ENCODE measurements at regions of chr6 and their contacts with region 1.

Region 1: GRCh38 chr6:84774157-84774984 is 10.0 kb upstream of the TBX18 start:
- DNase-seq: peak; percentile 79
- H3K4me3 ChIP-seq: peak overlapping the region; percentile 52 to 55 (median 54)
- H3K27ac ChIP-seq: no peak overlapping the region
- H3K4me1 ChIP-seq: peaks cover 15% of the 10 kb centered on the region
- H3K27me3 ChIP-seq: peaks cover 30 to 76% of the 10 kb centered on the region in 2 experiments
- CTCF ChIP-seq: peak; percentile 79 to 85
- POLR2A ChIP-seq: peak; percentile 35

Region 2: DNA sequence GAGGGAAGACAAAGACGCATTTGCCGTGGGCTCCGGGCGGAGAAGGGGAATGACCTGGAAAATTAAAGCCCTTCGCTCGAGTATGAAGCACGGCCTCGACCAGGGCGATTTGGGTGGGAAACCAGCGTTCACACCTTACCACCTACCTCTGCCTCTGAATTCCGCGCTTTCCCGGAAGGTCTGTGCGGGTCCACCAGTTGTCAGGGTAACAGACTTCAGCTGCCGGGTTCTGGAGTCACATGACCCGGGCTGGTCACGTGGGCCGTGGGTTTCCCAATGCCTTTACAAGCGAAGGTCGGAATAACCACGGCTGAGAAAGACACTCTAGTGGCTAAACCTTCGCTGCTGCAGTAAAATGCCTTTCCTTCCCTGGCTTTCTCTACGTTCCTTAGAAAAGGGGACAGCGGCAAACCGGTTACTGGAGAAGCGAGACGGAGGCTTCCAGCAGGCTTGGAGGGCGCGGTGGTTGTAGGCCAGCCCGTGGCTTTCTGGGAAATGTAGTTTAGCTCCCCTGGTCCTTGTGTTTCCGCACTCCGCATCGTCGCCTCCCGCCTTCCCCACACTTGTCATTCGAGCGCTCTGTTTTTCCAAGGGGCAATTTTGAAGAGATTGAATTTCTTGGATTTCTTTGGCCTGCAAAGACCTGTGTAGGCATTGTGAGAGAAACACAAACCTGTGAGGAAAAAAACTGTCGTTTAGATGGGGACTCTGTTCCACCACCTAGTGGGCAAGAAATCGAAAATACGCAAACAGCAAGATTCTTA is 546.8 kb before region 1 on chr6 and contains the start of gene CEP162:
- CTCF ChIA-PET with region 1: interaction called, 3 read pairs
- POLR2A ChIA-PET with region 1: no interaction called
- dilution Hi-C with region 1: no loop called
- intact Hi-C with region 1: loop called (anchors 2 kb)
- DNase-seq: peak; percentile 95
- H3K4me3 ChIP-seq: peak within 1 kb of the TSS; percentile 57 to 74 (median 67)
- H3K27ac ChIP-seq: peak within 1 kb of the TSS; percentile 14
- H3K4me1 ChIP-seq: peaks cover 7% of the 10 kb centered on the region
- H3K27me3 ChIP-seq: peaks cover 11 to 24% of the 10 kb centered on the region in 2 experiments
- CTCF ChIP-seq: peak; percentile 55 to 62
- POLR2A ChIP-seq: peak; percentile 20
- total RNA-seq, gene CEP162: 8.8 and 10.8 TPM in 2 replicates

Region 3: GRCh38 chr6:84284428-84285049 is 489.8 kb before region 1 on chr6:
- CTCF ChIA-PET with region 1: interaction called, 9 read pairs
- POLR2A ChIA-PET with region 1: no interaction called
- dilution Hi-C with region 1: no loop called
- intact Hi-C with region 1: loop called (anchors 1 kb)
- DNase-seq: peak; percentile 41
- H3K4me3 ChIP-seq: no peak overlapping the region
- H3K27ac ChIP-seq: no peak overlapping the region
- H3K4me1 ChIP-seq: no peaks in the 10 kb centered on the region
- H3K27me3 ChIP-seq: peaks cover 6 to 13% of the 10 kb centered on the region in 2 experiments
- CTCF ChIP-seq: peak; percentile 37 to 53
- POLR2A ChIP-seq: no peak

Region 4: GRCh38 chr6:84791233-84791632 is 16.9 kb after region 1 on chr6:
- CTCF ChIA-PET with region 1: interaction called, 31 read pairs
- POLR2A ChIA-PET with region 1: no interaction called
- dilution Hi-C with region 1: no loop called
- intact Hi-C with region 1: no loop called
- DNase-seq: peak; percentile 91
- H3K4me3 ChIP-seq: peak overlapping the region in 1 of 3 experiments; percentile 27
- H3K27ac ChIP-seq: peak overlapping the region; percentile 70
- H3K4me1 ChIP-seq: peaks cover 21% of the 10 kb centered on the region
- H3K27me3 ChIP-seq: no peaks in the 10 kb centered on the region
- CTCF ChIP-seq: no peak
- POLR2A ChIP-seq: no peak

Region 5: DNA sequence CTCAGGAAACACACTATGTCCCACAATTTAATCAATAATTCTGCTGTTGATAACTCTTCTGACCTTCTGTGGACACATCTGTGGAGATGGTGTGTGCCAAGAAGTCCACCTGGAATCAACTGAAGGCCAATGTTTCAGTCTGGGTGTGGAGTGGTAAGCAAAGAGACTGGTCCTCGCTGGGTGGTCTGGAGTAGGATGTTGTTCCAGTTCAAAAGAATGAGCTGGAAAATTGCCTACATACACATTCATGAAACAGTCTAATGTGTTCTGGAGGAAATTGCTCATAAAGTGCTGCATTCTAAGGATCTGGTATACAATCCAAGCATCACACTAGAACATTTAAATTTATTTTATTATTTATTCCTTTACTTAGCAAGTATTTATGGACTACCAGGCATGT is 23.9 kb after region 1 on chr6:
- CTCF ChIA-PET with region 1: interaction called, 25 read pairs
- POLR2A ChIA-PET with region 1: no interaction called
- dilution Hi-C with region 1: no loop called
- intact Hi-C with region 1: loop called (anchors 1 kb)
- DNase-seq: peak; percentile 94
- H3K4me3 ChIP-seq: no peak overlapping the region
- H3K27ac ChIP-seq: no peak overlapping the region
- H3K4me1 ChIP-seq: peaks cover 22% of the 10 kb centered on the region
- H3K27me3 ChIP-seq: no peaks in the 10 kb centered on the region
- CTCF ChIP-seq: no peak
- POLR2A ChIP-seq: no peak

Region 6: DNA sequence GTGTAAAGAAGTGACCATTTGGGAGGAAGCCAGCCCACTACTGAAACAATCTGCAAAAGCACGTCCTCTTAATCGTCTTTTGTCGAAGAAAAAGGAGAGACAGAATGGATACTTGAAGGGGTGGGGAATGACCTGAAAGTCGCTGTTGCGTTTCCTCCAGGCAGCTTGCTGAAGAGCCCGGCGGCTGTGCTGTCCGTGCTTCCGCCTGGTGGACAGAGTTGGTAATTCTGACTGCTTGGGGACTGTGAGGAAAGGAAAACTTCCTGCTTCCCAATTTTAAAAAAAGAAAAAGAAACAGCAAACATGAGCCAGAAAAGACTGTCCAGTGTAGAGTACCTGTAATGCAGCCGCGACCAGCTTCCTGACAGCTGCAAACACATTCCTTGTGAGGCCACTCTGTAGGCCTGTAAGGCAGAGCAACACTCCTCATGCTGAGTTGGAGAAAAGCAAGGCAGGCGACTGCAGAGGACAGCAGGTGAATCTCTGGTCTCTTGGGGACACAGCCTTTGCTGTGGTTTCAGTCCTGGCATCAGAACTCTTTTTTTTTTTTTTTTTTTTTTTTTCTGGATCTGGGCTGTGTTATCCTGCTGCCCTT is 241.1 kb after region 1 on chr6:
- CTCF ChIA-PET with region 1: interaction called, 8 read pairs
- POLR2A ChIA-PET with region 1: no interaction called
- dilution Hi-C with region 1: no loop called
- intact Hi-C with region 1: loop called (anchors 1 kb)
- DNase-seq: peak; percentile 83
- H3K4me3 ChIP-seq: no peak overlapping the region
- H3K27ac ChIP-seq: no peak overlapping the region
- H3K4me1 ChIP-seq: no peaks in the 10 kb centered on the region
- H3K27me3 ChIP-seq: peaks cover 9% of the 10 kb centered on the region in 2 experiments
- CTCF ChIP-seq: peak; percentile 80 to 82
- POLR2A ChIP-seq: no peak

Region 7: GRCh38 chr6:85126485-85127167 is 352.3 kb after region 1 on chr6:
- CTCF ChIA-PET with region 1: interaction called, 36 read pairs
- POLR2A ChIA-PET with region 1: no interaction called
- dilution Hi-C with region 1: no loop called
- intact Hi-C with region 1: loop called (anchors 1 kb)
- DNase-seq: peak; percentile 75
- H3K4me3 ChIP-seq: no peak overlapping the region
- H3K27ac ChIP-seq: no peak overlapping the region
- H3K4me1 ChIP-seq: no peaks in the 10 kb centered on the region
- H3K27me3 ChIP-seq: peaks cover 14 to 17% of the 10 kb centered on the region in 2 experiments
- CTCF ChIP-seq: peak; percentile 72 to 89
- POLR2A ChIP-seq: no peak

Measured in endothelial cell of umbilical vein (primary cell).